ENCODE measurements at regions of chr7 and their contacts with region 1.

Region 1: GRCh38 chr7:147071536-147071935 is 954.9 kb downstream of the CNTNAP2 start:
- DNase-seq: no peak
- H3K4me3 Mint-ChIP-seq: no peak overlapping the region
- H3K27ac Mint-ChIP-seq: no peak overlapping the region
- H3K4me1 Mint-ChIP-seq: no peaks in the 10 kb centered on the region
- H3K27me3 Mint-ChIP-seq: no peaks in the 10 kb centered on the region

Region 2: GRCh38 chr7:147022056-147022455 is 49.5 kb before region 1 on chr7:
- CTCF ChIA-PET with region 1: no interaction called
- POLR2A ChIA-PET with region 1: no interaction called
- DNase-seq: no peak
- H3K4me3 Mint-ChIP-seq: no peak overlapping the region
- H3K27ac Mint-ChIP-seq: no peak overlapping the region
- H3K4me1 Mint-ChIP-seq: no peaks in the 10 kb centered on the region
- H3K27me3 Mint-ChIP-seq: no peaks in the 10 kb centered on the region

Region 3: GRCh38 chr7:147053746-147054145 is 17.8 kb before region 1 on chr7:
- CTCF ChIA-PET with region 1: no interaction called
- POLR2A ChIA-PET with region 1: interaction called, 11 read pairs
- DNase-seq: no peak
- H3K4me3 Mint-ChIP-seq: no peak overlapping the region
- H3K27ac Mint-ChIP-seq: no peak overlapping the region
- H3K4me1 Mint-ChIP-seq: no peaks in the 10 kb centered on the region
- H3K27me3 Mint-ChIP-seq: no peaks in the 10 kb centered on the region

Region 4: GRCh38 chr7:147089051-147089461 is 17.5 kb after region 1 on chr7:
- CTCF ChIA-PET with region 1: no interaction called
- POLR2A ChIA-PET with region 1: no interaction called
- DNase-seq: no peak
- H3K4me3 Mint-ChIP-seq: no peak overlapping the region
- H3K27ac Mint-ChIP-seq: no peak overlapping the region
- H3K4me1 Mint-ChIP-seq: no peaks in the 10 kb centered on the region
- H3K27me3 Mint-ChIP-seq: no peaks in the 10 kb centered on the region

Measured in activated CD4-positive, alpha-beta T cell treated with anti-CD3 and anti-CD28 coated beads, Interleukin-2, amount 10 ng/mL, durations not matched to agents 7 days and 5 days (primary cell).